ENCODE measurements at regions of chr2 and their contacts with region 1.

Region 1: GRCh38 chr2:85888684-85889626 is at the start of gene ST3GAL5:
- DNase-seq: peak; percentile 93
- ATAC-seq: peak; percentile 85
- H3K4me3 Mint-ChIP-seq: peak within 1 kb of the TSS; percentile 94
- H3K27ac Mint-ChIP-seq: peak within 1 kb of the TSS; percentile 92
- H3K4me1 Mint-ChIP-seq: peaks cover 68% of the 10 kb centered on the region
- H3K27me3 Mint-ChIP-seq: no peaks in the 10 kb centered on the region
- total RNA-seq, gene ST3GAL5: 43.4 to 46.7 TPM

Region 2: DNA sequence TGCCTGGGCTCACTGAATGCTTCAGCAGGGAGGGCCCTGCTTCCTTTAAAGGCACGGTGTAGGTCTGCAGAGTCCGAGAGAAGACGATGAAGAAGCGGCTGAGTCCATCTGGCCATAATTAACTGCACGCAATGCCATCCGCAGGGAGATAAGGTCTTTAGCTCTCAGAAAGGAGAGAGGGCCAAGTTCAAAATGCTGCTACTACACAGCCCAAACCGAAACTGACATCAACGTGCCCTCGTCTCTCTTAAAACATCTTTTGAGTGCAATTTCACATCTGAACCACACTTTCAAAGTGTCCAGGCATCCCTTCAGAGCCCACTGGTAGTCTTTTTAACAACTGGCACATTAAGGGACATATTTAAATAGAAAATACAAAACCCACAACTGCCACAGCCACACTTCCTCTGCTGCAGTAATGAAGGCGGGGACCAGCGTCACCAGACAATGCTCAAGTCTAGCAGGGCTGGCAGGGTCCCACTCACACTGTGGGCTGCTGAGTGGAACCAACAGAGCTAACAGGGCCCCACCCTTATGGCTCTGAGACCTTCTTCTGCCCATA is 35.9 kb before region 1 on chr2:
- CTCF ChIA-PET with region 1: interaction called, 57 read pairs
- POLR2A ChIA-PET with region 1: interaction called, 10 read pairs
- DNase-seq: peak; percentile 85
- ATAC-seq: peak; percentile 91
- H3K4me3 Mint-ChIP-seq: peak overlapping the region; percentile 83
- H3K27ac Mint-ChIP-seq: peak overlapping the region; percentile 100
- H3K4me1 Mint-ChIP-seq: peaks cover 57% of the 10 kb centered on the region
- H3K27me3 Mint-ChIP-seq: no peaks in the 10 kb centered on the region

Region 3: DNA sequence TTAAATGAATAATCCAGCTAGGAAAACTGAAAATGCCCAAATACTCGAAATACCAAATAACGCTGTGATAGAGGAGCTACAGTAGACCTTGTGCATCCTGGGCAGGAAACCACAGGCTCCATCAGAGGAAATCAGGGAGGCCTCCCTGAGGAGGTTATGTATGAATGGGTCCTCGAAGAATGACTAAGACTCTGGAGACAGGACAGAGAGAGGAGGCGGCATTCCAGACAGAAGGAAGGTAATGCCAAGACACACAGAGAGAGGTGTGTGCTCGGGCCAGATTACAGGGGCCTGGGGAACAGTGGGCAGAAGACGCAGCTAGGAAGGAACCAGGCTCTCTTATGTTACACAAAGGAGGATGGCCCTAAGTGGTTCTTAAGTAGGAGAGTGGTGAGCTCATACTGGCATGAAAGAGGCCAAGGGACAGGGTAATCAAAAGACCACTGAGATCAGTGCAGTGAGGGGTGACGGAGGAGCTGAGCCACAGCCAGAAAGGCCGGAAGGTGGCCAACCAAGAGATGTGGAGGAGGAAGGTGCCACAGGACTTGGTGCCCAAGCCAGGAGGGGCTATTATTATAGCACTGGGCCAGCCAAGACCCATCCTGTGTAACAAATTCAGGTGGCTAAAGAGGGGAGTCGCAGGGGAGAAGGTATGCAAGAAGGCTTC is 10.1 kb before region 1 on chr2:
- CTCF ChIA-PET with region 1: interaction called, 30 read pairs
- POLR2A ChIA-PET with region 1: interaction called, 3 read pairs
- DNase-seq: no peak
- ATAC-seq: peak; percentile 52
- H3K4me3 Mint-ChIP-seq: no peak overlapping the region
- H3K27ac Mint-ChIP-seq: peak overlapping the region; percentile 22
- H3K4me1 Mint-ChIP-seq: peaks cover 62% of the 10 kb centered on the region
- H3K27me3 Mint-ChIP-seq: no peaks in the 10 kb centered on the region

Region 4: GRCh38 chr2:85920810-85921545 is 32.0 kb after region 1 on chr2:
- CTCF ChIA-PET with region 1: interaction called, 13 read pairs
- POLR2A ChIA-PET with region 1: interaction called, 3 read pairs
- DNase-seq: no peak
- ATAC-seq: no peak
- H3K4me3 Mint-ChIP-seq: no peak overlapping the region
- H3K27ac Mint-ChIP-seq: no peak overlapping the region
- H3K4me1 Mint-ChIP-seq: peaks cover 13% of the 10 kb centered on the region
- H3K27me3 Mint-ChIP-seq: peaks cover 5% of the 10 kb centered on the region

Region 5: DNA sequence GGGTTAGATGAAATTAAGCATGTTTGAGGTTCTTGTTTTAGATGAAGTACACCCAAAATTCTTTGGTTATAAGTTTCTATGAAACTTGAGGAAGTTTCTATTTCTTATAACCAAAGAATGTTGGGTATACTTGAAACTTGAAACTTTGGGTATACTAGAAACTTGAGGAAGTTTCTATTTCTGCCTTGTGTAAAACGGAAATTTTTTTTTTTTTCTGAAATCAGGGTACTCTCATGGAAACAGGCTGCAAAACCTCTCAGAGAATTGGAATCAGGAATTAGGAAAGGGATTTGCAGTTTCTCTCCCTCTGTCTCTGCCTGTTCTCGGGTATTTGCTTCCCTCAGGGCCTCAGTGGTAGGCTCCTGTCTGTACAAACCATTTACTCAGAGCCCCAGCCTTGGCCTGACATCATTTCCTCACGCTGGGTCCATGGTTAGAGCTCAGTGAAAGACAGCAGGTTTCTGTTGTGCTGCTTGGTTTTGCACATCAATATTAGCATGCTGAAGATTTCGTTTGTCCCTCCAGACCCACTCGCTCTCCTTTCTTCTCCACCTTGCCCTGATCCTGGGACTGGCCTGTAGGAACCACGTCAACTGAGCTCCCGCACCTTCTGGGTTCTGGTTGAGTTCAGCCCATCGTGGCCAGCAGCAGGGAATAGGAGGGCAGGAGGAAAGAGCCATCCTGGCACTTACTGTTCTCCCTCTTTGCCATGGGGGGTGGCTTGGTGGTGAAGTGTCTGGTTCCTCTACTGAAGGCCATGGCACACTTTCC is 110.3 kb after region 1 on chr2:
- CTCF ChIA-PET with region 1: interaction called, 16 read pairs
- POLR2A ChIA-PET with region 1: interaction called, 4 read pairs
- DNase-seq: peak; percentile 83
- ATAC-seq: peak; percentile 91
- H3K4me3 Mint-ChIP-seq: peak overlapping the region; percentile 55
- H3K27ac Mint-ChIP-seq: peak overlapping the region; percentile 96
- H3K4me1 Mint-ChIP-seq: peaks cover 78% of the 10 kb centered on the region
- H3K27me3 Mint-ChIP-seq: no peaks in the 10 kb centered on the region

Region 6: GRCh38 chr2:86079981-86080911 is 191.3 kb after region 1 on chr2:
- CTCF ChIA-PET with region 1: interaction called, 143 read pairs
- POLR2A ChIA-PET with region 1: interaction called, 6 read pairs
- DNase-seq: peak; percentile 90
- ATAC-seq: peak; percentile 88
- H3K4me3 Mint-ChIP-seq: no peak overlapping the region
- H3K27ac Mint-ChIP-seq: peak overlapping the region; percentile 88
- H3K4me1 Mint-ChIP-seq: peaks cover 41% of the 10 kb centered on the region
- H3K27me3 Mint-ChIP-seq: no peaks in the 10 kb centered on the region

Region 7: GRCh38 chr2:86274918-86275275 is 385.9 kb after region 1 on chr2:
- CTCF ChIA-PET with region 1: no interaction called
- POLR2A ChIA-PET with region 1: no interaction called
- DNase-seq: no peak
- ATAC-seq: no peak
- H3K4me3 Mint-ChIP-seq: no peak overlapping the region
- H3K27ac Mint-ChIP-seq: no peak overlapping the region
- H3K4me1 Mint-ChIP-seq: peaks cover 13% of the 10 kb centered on the region
- H3K27me3 Mint-ChIP-seq: peaks cover 8% of the 10 kb centered on the region

Region 8: DNA sequence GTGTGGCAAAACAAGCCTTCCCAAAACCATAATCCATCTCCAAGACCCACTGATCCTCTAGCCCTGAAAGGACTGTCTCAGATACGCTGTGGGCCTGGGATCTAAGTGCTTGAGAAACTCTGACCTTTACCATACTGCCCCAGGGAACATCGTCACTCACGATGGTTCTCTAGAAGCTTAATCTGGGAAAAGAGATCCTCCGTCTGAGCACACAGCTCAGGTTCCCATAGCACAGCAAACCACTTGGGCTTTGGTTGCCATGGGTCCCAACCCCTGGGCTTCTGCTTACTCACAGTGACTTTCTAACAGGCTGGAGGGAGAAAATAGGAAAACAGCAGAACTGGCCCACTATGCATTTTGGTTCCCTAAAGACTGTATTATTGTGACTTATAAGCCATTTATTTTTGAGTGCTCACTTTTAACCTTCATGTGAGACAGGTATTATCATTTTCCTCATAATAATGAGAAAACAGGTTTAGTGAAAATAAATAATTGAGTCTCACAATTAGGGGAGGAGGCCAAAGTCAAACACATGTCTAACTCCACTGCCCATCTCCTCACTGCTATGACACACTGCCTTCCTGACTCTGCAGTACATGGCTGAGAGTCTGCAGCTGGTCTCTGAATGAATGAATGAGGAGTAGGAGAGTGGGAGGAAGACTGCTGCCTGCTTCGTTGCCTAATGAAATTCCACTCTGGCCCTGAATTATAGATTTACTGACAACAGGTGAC is 401.8 kb after region 1 on chr2:
- CTCF ChIA-PET with region 1: no interaction called
- POLR2A ChIA-PET with region 1: no interaction called
- DNase-seq: no peak
- ATAC-seq: no peak
- H3K4me3 Mint-ChIP-seq: no peak overlapping the region
- H3K27ac Mint-ChIP-seq: no peak overlapping the region
- H3K4me1 Mint-ChIP-seq: no peaks in the 10 kb centered on the region
- H3K27me3 Mint-ChIP-seq: peaks cover 32% of the 10 kb centered on the region

Measured in activated CD8-positive, alpha-beta T cell treated with anti-CD3 and anti-CD28 coated beads, Interleukin-2, amount 10 ng/mL, durations not matched to agents 7 days and 5 days (primary cell).